ENCODE measurements at regions of chr9 and their contacts with region 1.

Region 1: DNA sequence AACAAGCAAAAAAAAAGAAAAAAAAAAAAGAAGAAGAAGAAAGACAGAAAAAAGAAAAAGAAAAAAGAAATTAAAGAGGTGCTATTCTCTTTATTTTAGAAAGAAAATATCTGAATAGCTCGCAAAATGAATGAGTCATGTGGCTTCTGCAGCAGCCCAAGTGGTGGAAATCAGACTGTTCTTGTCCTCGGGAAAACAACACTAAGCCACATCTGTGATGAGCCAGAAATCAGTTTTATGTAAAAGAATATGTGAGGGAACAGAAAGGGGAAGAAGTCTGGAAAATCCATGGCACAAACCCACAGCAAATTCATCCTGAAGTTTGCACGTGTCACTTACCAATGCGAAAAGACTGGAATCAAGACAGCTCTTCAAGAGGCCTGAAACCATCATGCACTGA is 118.7 kb upstream of the GAS1 start:
- DNase-seq: no peak
- ATAC-seq: no peak
- H3K4me3 ChIP-seq: no peak overlapping the region
- H3K27ac ChIP-seq: no peak overlapping the region
- H3K4me1 ChIP-seq: no peaks in the 10 kb centered on the region
- H3K27me3 ChIP-seq: peaks cover 37% of the 10 kb centered on the region
- CTCF ChIP-seq: no peak
- POLR2A ChIP-seq: no peak
- RAD21 ChIP-seq: no peak

Region 2: GRCh38 chr9:87054999-87055686 is 10.8 kb before region 1 on chr9:
- CTCF ChIA-PET with region 1: no interaction called
- POLR2A ChIA-PET with region 1: no interaction called
- RAD21 ChIA-PET with region 1: no interaction called
- intact Hi-C with region 1: loop called (anchors 1 kb)
- DNase-seq: no peak
- ATAC-seq: no peak
- H3K4me3 ChIP-seq: no peak overlapping the region
- H3K27ac ChIP-seq: no peak overlapping the region
- H3K4me1 ChIP-seq: no peaks in the 10 kb centered on the region
- H3K27me3 ChIP-seq: peaks cover 32% of the 10 kb centered on the region
- CTCF ChIP-seq: no peak
- POLR2A ChIP-seq: no peak
- RAD21 ChIP-seq: no peak

Measured in HCT116 (cell line).